ENCODE measurements at regions of chr16 and their contacts with region 1.

Region 1: GRCh38 chr16:75206749-75207451 is at the start of gene CTRB2:
- DNase-seq: no peak
- ATAC-seq: no peak
- total RNA-seq, gene CTRB2: 6.1 TPM in 1 of 2 donors, not detected in the other

Region 2: DNA sequence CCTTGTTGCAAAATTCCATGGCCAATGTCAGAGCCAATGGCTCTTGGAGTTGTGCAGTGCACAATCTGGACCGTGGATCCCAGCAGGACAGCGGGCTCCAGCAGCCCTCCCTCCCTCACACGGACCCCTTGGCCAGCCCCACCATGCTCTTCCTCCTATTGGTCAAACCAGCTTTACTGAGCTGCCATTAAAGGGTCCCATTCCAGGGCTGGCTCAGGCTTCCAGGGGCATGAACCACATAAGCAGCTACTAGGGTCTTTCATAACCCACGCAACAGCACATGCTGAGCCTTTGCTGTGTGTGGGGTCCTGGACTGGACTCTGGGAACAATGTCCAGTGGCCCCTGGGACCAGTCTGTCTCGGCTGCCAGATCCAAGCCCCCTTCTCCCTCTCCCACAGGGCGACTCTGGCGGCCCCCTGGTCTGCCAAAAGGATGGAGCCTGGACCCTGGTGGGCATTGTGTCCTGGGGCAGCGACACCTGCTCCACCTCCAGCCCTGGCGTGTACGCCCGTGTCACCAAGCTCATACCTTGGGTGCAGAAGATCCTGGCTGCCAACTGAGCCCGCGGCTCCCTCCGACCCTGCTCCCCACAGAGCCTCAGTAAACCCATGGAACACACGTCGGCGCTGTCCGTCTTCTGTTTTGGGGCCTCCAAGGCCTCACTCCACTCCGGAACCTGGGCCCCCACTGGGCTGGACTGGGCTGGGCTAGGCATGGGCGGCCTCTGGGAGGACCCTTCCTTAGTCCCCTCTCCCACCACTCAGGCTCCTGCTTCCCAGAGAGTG is 17.6 kb after region 1 on chr16:
- intact Hi-C with region 1: loop called in 1 of 2 experiments (anchors 2 kb)
- DNase-seq: no peak
- ATAC-seq: peak; percentile 1

Measured in left colon (tissue), 2 donors.